Panc1 (cell line): ENCODE measurements at regions of chr1 and their contacts with region 1.

Region 1: DNA sequence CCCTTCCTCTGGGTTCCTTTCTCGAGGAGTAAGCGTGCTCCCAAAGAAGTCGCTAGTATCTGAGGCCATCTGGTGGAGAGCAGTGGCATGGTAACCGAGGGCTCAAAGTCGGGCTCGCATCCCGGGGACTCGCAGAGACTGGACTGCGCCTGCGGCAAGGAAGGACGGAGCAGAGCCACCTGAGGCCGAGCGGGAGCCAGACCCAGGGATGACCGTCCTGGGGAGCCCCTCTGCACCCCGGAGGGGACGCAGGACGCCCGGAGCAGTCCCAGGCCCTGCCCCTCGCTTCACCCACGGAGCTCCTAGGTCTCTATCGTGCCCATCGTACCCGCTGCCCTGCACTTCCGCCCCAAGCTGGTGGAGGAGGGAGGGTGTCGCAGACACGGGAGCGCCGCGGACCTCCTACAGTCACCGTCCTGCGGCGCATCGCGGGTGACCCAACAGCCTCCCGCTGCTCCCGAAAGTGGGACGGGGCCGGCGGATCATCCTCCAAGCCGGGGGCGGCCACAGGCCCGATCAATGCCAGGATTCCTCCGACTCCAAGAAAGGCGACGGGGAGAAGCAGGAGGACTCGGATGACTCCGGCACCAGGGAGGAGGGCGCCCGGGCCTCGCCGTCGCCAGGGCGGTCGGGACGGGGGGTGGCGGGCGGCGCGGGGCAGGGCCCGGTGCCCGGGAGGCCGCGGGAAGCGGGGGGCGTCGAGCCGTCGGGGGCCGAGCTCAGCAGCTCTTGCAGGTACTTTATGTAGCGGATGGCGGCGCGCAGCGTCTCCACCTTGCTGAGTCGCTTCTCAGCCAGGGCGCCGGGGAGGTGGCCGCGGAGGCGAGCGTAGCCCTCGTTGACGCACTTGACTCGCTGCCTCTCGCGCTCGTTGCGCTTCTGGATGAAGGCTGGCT is 2.3 kb upstream of the CACNA1S start:
- DNase-seq: peak; percentile 82
- ATAC-seq: peak; percentile 98
- H3K4me3 ChIP-seq: peak overlapping the region; percentile 62 to 78
- H3K27ac ChIP-seq: peak overlapping the region; percentile 63; the same call in 1 of the 2 replicates
- H3K4me1 ChIP-seq: peaks cover 3% of the 10 kb centered on the region; the same call in 1 of the 2 replicates
- H3K27me3 ChIP-seq: no peaks in the 10 kb centered on the region
- CTCF ChIP-seq: peak; percentile 89

Region 2: DNA sequence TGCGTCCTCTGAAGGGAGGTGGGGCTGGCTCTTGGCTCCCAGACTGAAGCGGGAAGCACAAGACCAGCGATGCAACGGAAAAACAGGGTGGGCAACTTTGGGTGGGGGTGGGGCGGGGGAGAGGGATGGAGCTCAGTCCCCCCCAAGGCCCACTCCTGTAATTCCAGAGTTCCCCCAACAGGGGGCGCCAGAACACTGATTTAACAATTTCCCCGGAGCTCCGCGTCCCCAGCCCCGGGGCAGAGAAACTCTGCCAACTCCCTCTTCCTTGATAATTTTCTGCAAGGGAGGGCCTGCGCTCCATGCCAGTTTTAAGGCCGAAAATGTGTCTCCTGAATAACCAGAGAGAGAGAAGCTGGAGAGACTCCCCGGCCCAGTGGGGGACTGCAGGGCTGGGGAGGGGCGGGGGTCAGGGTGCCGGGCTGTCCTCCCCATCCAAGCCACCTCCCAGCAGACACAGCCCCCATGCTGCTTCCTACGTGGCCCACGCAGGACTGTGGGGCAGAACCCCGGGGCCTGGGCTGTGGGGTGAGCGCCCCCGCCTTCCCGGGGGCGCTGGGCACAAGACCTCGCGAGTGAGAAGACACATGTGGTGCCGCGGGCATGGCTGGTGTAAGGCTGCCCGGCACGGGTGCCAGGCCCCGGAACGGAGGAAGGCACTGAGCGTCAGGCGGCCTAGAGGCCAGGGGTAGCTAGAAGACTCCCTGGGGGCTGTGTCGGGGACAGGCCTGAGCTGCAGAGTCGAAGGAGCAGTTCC is 142.4 kb before region 1 on chr1:
- CTCF ChIA-PET with region 1: interaction called, 11 read pairs
- POLR2A ChIA-PET with region 1: no interaction called
- in situ Hi-C with region 1: no loop called
- intact Hi-C with region 1: loop called (anchors 5 kb)
- DNase-seq: no peak
- ATAC-seq: no peak
- H3K4me3 ChIP-seq: no peak overlapping the region
- H3K27ac ChIP-seq: no peak overlapping the region
- H3K4me1 ChIP-seq: no peaks in the 10 kb centered on the region
- H3K27me3 ChIP-seq: no peaks in the 10 kb centered on the region
- CTCF ChIP-seq: peak; percentile 93

Region 3: DNA sequence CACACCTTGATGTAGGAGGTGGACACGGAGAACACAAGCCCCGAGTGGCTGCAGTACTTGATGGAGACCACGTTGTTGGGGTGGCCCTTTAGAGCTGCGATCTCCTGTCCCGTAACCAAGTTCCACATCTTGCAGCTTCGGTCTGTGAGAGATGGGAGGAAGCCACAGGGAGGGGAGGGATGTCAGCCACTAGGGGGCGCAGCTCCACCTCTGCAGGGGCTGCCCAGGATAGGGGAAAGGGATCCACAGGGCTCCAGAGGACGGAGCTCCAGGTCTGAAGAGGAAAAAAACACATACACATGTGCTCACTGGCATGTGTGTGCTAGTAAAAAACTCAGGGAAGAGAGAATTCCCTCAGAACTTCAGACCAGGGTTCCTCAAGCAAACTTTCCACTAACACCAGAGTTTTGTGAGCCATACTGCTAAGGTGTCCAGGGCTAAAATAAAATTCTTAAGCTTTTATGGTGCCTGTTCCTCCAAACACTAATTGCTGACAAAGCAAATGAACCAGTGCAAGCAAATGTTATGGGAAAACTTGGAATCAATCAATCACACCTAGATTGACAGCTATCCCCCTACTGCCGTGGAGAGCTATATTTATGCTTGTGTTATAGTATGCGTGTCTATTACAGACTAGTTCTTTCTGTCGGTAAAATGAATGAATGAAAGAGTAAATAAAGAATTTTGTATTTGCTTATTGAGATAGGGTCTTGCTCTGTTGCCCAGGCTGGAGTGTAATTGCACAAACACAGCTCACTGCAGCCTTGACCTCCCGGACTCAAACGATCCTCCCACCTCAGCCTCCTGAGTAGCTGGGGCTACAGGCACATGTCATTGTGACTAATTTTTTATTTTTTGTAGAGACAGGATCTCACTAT is 134.7 kb before region 1 on chr1:
- CTCF ChIA-PET with region 1: interaction called, 7 read pairs
- POLR2A ChIA-PET with region 1: no interaction called
- in situ Hi-C with region 1: no loop called
- intact Hi-C with region 1: loop called (anchors 5 kb)
- DNase-seq: no peak
- ATAC-seq: peak; percentile 94
- H3K4me3 ChIP-seq: no peak overlapping the region
- H3K27ac ChIP-seq: no peak overlapping the region
- H3K4me1 ChIP-seq: no peaks in the 10 kb centered on the region
- H3K27me3 ChIP-seq: no peaks in the 10 kb centered on the region
- CTCF ChIP-seq: peak; percentile 89

Region 4: GRCh38 chr1:201036188-201036842 is 78.2 kb before region 1 on chr1:
- CTCF ChIA-PET with region 1: interaction called, 16 read pairs
- POLR2A ChIA-PET with region 1: no interaction called
- in situ Hi-C with region 1: no loop called
- intact Hi-C with region 1: no loop called
- DNase-seq: no peak
- ATAC-seq: no peak
- H3K4me3 ChIP-seq: no peak overlapping the region
- H3K27ac ChIP-seq: no peak overlapping the region
- H3K4me1 ChIP-seq: no peaks in the 10 kb centered on the region
- H3K27me3 ChIP-seq: peaks cover 4% of the 10 kb centered on the region; the same call in 1 of the 2 replicates
- CTCF ChIP-seq: no peak

Region 5: DNA sequence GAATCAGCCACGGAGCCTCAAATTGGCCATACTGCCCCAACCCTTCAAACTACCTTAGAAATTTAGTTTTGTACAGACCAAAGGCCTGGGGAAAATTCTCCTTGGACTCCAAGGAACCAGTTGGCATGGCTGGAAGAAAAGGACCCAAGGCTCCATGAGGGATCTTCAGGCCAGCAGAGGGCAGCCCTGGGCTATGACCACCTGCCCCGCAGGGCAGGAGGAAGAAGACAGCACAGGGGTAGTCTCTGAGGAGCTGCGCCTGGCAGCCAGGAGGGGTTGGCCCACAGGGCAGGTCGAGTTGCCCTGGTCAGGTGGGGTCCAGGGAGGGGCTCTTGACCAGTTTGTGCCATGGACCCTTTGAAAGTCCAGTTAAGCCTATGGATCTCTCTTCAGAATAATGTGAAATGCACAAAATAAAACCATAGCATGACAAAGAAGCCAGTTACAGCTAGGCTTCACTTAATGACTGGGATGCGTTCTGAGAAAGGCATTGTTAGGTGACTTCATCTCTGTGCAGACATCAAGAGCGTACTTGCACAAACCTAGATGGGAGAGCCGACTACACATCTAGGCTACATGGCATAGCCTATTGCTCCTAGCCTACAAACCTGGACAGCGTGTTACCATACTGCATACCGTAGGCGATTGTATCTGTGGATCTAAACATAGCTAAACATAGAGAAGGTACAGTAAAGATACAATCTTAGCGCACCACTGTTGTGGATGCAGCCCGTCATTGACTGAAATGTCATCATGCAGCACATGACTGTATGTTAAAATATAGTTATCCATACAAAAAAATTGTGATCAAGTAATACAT is 28.4 kb before region 1 on chr1:
- CTCF ChIA-PET with region 1: interaction called, 25 read pairs
- POLR2A ChIA-PET with region 1: no interaction called
- in situ Hi-C with region 1: no loop called
- intact Hi-C with region 1: loop called (anchors 1 kb)
- DNase-seq: peak; percentile 41
- ATAC-seq: peak; percentile 98
- H3K4me3 ChIP-seq: no peak overlapping the region
- H3K27ac ChIP-seq: no peak overlapping the region
- H3K4me1 ChIP-seq: no peaks in the 10 kb centered on the region
- H3K27me3 ChIP-seq: peaks cover 5% of the 10 kb centered on the region
- CTCF ChIP-seq: peak; percentile 87